ENCODE measurements at regions of chr14 and their contacts with region 1.

Region 1: DNA sequence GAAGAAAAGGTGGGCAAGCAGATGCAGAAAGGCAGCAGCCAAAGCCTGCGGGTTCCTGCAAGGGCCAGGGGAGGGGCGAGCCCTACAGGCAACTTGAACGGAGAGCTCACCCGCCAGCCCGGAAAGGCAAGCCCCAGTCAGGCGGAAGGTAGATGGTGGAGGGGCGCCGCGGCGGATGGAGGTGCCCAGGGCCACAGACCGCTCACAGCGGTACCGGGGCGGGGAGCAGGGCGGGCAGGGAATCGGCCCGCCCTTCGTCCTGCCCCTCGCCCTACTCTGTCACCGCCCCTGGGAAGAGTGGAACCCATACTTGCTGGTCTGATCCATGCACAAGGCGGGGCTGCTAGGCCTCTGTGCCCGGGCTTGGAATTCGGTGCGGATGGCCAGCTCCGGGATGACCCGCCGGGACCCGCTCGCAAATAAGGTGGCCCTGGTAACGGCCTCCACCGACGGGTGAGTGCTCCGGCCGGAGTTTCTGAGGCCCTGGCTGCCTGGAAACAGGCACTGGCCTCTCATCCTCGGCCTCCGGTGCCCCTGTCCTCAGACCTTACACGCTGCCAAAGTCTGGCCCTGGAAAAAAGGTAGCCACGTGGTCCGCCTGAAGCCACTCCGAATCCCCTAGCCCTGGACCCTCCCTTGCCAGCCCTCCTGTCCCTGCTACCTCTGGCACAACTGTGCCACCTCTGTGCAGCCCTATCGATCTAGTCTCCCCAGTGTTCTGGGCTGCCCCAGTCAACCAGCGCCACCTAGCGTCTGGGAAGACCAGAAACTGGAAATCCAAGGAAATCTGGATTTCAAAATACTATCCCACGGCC is at the start of gene DHRS4:
- DNase-seq: peak; percentile 63 to 84 (median 80)
- ATAC-seq: peak; percentile 94
- H3K4me3 ChIP-seq: peak within 1 kb of the TSS; percentile 77
- H3K4me3 Mint-ChIP-seq: peak within 1 kb of the TSS; percentile 94 to 100 (median 98)
- H3K27ac ChIP-seq: peak within 1 kb of the TSS; percentile 80
- H3K27ac Mint-ChIP-seq: peak within 1 kb of the TSS; percentile 70 to 94 (median 89)
- H3K4me1 ChIP-seq: peaks cover 8 to 17% of the 10 kb centered on the region in 2 donors
- H3K4me1 Mint-ChIP-seq: peaks cover 18 to 35% (median 27%) of the 10 kb centered on the region in 7 donors
- H3K27me3 ChIP-seq: no peaks in the 10 kb centered on the region
- H3K27me3 Mint-ChIP-seq: peaks cover 0 to 1% (median 0%) of the 10 kb centered on the region in 5 donors
- total RNA-seq, gene DHRS4: 7.8 to 19.9 (median 17.5) TPM

Region 2: DNA sequence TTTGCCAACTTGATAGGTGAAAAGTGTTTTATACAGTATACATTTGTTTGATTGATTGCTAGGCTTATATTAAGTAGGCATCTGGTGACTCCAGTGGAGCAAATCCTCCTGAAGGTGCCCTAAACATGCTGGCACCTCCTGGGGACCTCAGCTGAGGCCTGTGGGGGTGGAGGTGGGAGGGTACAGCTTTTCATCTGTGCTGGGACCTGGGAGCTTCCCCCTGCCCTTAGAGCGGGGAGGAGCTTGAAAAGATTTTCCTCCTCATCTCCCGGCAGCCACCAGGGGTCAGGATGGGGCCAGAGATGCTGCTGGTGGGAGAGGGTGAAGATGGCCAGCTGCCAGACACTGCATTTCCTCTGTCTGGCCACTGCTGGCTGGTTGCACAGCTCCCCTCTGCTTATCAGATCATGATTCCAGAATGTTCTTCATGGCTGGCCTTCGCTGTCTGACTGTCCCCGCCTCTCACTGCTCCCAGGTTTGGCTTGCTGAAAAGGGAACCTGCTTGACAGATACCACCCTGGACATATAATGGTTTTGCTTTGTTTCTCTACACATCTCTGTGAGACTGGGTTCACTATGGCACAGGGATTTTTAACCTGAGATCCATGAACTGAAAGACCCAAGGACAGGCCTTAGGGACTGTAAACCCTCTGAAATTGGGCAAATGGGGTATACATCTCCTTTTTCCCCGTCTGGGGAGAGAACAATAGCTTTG is 364.6 kb before region 1 on chr14:
- CTCF ChIA-PET with region 1: interaction called, 6 read pairs
- POLR2A ChIA-PET with region 1: no interaction called
- intact Hi-C with region 1: loop called (anchors 1 kb)
- DNase-seq: peak; percentile 63 to 84 (median 79)
- ATAC-seq: peak; percentile 98
- H3K4me3 ChIP-seq: no peak overlapping the region
- H3K4me3 Mint-ChIP-seq: no peak overlapping the region
- H3K27ac ChIP-seq: no peak overlapping the region
- H3K27ac Mint-ChIP-seq: peak overlapping the region in 2 of 9 donors; percentile 21 to 65
- H3K4me1 ChIP-seq: no peaks in the 10 kb centered on the region
- H3K4me1 Mint-ChIP-seq: peaks cover 3 to 13% (median 9%) of the 10 kb centered on the region in 7 donors
- H3K27me3 ChIP-seq: no peaks in the 10 kb centered on the region
- H3K27me3 Mint-ChIP-seq: peaks cover 9 to 21% (median 14%) of the 10 kb centered on the region in 5 donors

Region 3: GRCh38 chr14:23727566-23728335 is 225.9 kb before region 1 on chr14:
- CTCF ChIA-PET with region 1: no interaction called
- POLR2A ChIA-PET with region 1: no interaction called
- intact Hi-C with region 1: loop called in 1 of 2 experiments (anchors 5 kb)
- DNase-seq: peak in 1 of 9 donors; percentile 9
- ATAC-seq: peak; percentile 50
- H3K4me3 ChIP-seq: no peak overlapping the region
- H3K4me3 Mint-ChIP-seq: no peak overlapping the region
- H3K27ac ChIP-seq: no peak overlapping the region
- H3K27ac Mint-ChIP-seq: no peak overlapping the region
- H3K4me1 ChIP-seq: no peaks in the 10 kb centered on the region
- H3K4me1 Mint-ChIP-seq: no peaks in the 10 kb centered on the region
- H3K27me3 ChIP-seq: no peaks in the 10 kb centered on the region
- H3K27me3 Mint-ChIP-seq: peaks cover 0 to 20% (median 10%) of the 10 kb centered on the region in 5 donors

Region 4: GRCh38 chr14:23929822-23930294 is 23.8 kb before region 1 on chr14:
- CTCF ChIA-PET with region 1: interaction called, 4 read pairs
- POLR2A ChIA-PET with region 1: no interaction called
- intact Hi-C with region 1: loop called (anchors 1 kb)
- DNase-seq: peak; percentile 54 to 81 (median 71)
- ATAC-seq: peak; percentile 92
- H3K4me3 ChIP-seq: no peak overlapping the region
- H3K4me3 Mint-ChIP-seq: no peak overlapping the region
- H3K27ac ChIP-seq: no peak overlapping the region
- H3K27ac Mint-ChIP-seq: no peak overlapping the region
- H3K4me1 ChIP-seq: no peaks in the 10 kb centered on the region
- H3K4me1 Mint-ChIP-seq: no peaks in the 10 kb centered on the region
- H3K27me3 ChIP-seq: no peaks in the 10 kb centered on the region
- H3K27me3 Mint-ChIP-seq: peaks cover 0 to 8% (median 0%) of the 10 kb centered on the region in 5 donors

Region 5: DNA sequence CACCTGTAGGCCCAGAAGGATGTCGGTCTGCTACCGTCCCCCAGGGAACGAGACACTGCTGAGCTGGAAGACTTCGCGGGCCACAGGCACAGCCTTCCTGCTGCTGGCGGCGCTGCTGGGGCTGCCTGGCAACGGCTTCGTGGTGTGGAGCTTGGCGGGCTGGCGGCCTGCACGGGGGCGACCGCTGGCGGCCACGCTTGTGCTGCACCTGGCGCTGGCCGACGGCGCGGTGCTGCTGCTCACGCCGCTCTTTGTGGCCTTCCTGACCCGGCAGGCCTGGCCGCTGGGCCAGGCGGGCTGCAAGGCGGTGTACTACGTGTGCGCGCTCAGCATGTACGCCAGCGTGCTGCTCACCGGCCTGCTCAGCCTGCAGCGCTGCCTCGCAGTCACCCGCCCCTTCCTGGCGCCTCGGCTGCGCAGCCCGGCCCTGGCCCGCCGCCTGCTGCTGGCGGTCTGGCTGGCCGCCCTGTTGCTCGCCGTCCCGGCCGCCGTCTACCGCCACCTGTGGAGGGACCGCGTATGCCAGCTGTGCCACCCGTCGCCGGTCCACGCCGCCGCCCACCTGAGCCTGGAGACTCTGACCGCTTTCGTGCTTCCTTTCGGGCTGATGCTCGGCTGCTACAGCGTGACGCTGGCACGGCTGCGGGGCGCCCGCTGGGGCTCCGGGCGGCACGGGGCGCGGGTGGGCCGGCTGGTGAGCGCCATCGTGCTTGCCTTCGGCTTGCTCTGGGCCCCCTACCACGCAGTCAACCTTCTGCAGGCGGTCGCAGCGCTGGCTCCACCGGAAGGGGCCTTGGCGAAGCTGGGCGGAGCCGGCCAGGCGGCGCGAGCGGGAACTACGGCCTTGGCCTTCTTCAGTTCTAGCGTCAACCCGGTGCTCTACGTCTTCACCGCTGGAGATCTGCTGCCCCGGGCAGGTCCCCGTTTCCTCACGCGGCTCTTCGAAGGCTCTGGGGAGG is 357.3 kb after region 1 on chr14 and contains the start of gene LTB4R:
- CTCF ChIA-PET with region 1: no interaction called
- POLR2A ChIA-PET with region 1: no interaction called
- intact Hi-C with region 1: loop called in 1 of 2 experiments (anchors 1 kb)
- DNase-seq: peak; percentile 61 to 79 (median 73)
- ATAC-seq: peak; percentile 85
- H3K4me3 ChIP-seq: peak within 1 kb of the TSS; percentile 50
- H3K4me3 Mint-ChIP-seq: peak within 1 kb of the TSS; percentile 77 to 91 (median 85)
- H3K27ac ChIP-seq: peak within 1 kb of the TSS; percentile 76
- H3K27ac Mint-ChIP-seq: peak within 1 kb of the TSS; percentile 86 to 95 (median 89)
- H3K4me1 ChIP-seq: peaks cover 60 to 65% of the 10 kb centered on the region in 2 donors
- H3K4me1 Mint-ChIP-seq: peaks cover 58 to 79% (median 72%) of the 10 kb centered on the region in 7 donors
- H3K27me3 ChIP-seq: no peaks in the 10 kb centered on the region
- H3K27me3 Mint-ChIP-seq: no peaks in the 10 kb centered on the region
- total RNA-seq, gene LTB4R: 14.1 to 28.8 (median 26.3) TPM

Measured in naive thymus-derived CD4-positive, alpha-beta T cell (primary cell).